H1 (cell line): ENCODE measurements at regions of chr7 and their contacts with region 1.

Region 1: GRCh38 chr7:134730411-134730829 is 49.0 kb upstream of the CALD1 start:
- DNase-seq: no peak
- H3K4me3 ChIP-seq: no peak overlapping the region
- H3K27ac ChIP-seq: no peak overlapping the region
- H3K4me1 ChIP-seq: no peaks in the 10 kb centered on the region
- H3K27me3 ChIP-seq: 0 out of 7 replicates have a peak, but pooled peaks cover 0 to 2% (median 0%) of the 10 kb centered on the region in 4 experiments
- CTCF ChIP-seq: no peak
- EP300 ChIP-seq: no peak
- POLR2A ChIP-seq: no peak
- RAD21 ChIP-seq: no peak

Region 2: DNA sequence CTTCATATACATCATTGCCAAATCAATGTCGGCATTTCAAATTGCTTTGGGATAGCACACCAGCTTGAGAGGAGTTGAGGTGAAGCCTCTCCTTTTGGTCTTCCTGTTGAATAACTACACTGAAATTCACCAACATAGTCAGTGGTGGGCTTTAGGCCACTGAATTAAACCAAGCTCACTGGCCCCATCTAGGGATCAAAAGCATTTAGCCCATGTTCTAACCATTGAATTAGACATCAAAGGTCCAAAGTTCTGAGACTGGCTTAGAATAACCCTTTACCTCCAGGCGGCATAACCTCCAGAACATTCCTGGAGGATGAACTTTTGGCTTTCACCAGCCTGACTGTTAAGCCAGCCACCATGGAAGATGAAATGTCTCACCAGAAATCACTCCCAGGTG is 29.1 kb before region 1 on chr7:
- CTCF ChIA-PET with region 1: interaction called, 52 read pairs
- POLR2A ChIA-PET with region 1: no interaction called
- DNase-seq: no peak
- H3K4me3 ChIP-seq: no peak overlapping the region
- H3K27ac ChIP-seq: no peak overlapping the region
- H3K4me1 ChIP-seq: peaks cover 0 to 7% (median 4%) of the 10 kb centered on the region in 4 experiments; a peak in 3 of 7 replicates
- H3K27me3 ChIP-seq: no peaks in the 10 kb centered on the region
- CTCF ChIP-seq: peak in 2 of 3 experiments; percentile 61 to 66; a peak in 3 of 4 replicates
- EP300 ChIP-seq: no peak
- POLR2A ChIP-seq: no peak
- RAD21 ChIP-seq: peak; percentile 62 to 71